Caco-2 (cell line): ENCODE measurements at regions of chr2 and their contacts with region 1.

Region 1: DNA sequence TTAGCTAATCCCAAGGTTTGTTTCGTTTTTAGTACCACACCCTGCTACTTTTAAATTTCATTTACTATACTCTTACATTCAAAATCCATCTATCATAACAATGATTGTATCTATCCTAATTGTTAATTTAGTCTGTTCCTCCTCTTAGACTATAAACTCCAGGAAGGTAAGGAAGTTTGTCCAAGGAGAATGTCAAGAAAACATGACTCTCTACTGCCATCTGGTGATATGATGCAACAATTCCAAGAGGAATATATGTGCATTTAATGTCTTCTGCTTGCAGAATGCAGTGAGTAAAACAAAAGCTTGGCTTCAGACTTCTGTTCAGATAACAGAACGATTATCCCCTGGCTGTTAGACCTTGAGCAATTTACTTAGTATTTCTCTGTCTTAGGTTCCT is 1267.1 kb downstream of the LRP1B start:
- DNase-seq: peak in 1 of 2 experiments; percentile 35
- H3K4me3 ChIP-seq: no peak overlapping the region
- H3K4me3 Mint-ChIP-seq: no peak overlapping the region
- H3K27ac Mint-ChIP-seq: no peak overlapping the region
- H3K4me1 ChIP-seq: no peaks in the 10 kb centered on the region
- H3K4me1 Mint-ChIP-seq: peaks cover 7% of the 10 kb centered on the region
- H3K27me3 ChIP-seq: no peaks in the 10 kb centered on the region
- H3K27me3 Mint-ChIP-seq: no peaks in the 10 kb centered on the region
- CTCF ChIP-seq: peak; percentile 56 to 68

Region 2: GRCh38 chr2:140085674-140086073 is 778.0 kb before region 1 on chr2:
- CTCF ChIA-PET with region 1: no interaction called
- POLR2A ChIA-PET with region 1: no interaction called
- intact Hi-C with region 1: loop called (anchors 5 kb)
- DNase-seq: no peak
- H3K4me3 ChIP-seq: no peak overlapping the region
- H3K4me3 Mint-ChIP-seq: no peak overlapping the region
- H3K27ac Mint-ChIP-seq: no peak overlapping the region
- H3K4me1 ChIP-seq: no peaks in the 10 kb centered on the region
- H3K4me1 Mint-ChIP-seq: no peaks in the 10 kb centered on the region
- H3K27me3 ChIP-seq: no peaks in the 10 kb centered on the region
- H3K27me3 Mint-ChIP-seq: peaks cover 2% of the 10 kb centered on the region
- CTCF ChIP-seq: no peak

Region 3: DNA sequence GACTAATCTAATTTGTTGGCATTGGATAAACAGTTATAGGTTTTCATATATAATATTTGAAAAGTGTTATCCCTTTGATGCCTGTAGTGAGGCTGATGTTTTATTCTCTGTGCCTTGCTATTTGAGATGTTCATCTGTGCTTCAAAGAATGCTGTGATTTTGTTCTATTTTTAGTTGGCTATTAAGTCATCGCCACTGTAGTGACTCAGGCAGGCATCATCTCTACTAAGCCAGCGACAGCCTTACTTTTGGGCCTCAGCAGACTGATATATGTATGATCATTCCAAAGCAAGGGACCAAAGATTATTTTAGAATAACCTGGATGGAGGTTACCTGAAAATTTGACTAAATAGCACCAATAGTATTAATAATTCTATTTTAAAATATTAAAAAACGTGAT is 409.0 kb before region 1 on chr2:
- CTCF ChIA-PET with region 1: no interaction called
- POLR2A ChIA-PET with region 1: no interaction called
- intact Hi-C with region 1: no loop called
- DNase-seq: no peak
- H3K4me3 ChIP-seq: no peak overlapping the region
- H3K4me3 Mint-ChIP-seq: no peak overlapping the region
- H3K27ac Mint-ChIP-seq: no peak overlapping the region
- H3K4me1 ChIP-seq: no peaks in the 10 kb centered on the region
- H3K4me1 Mint-ChIP-seq: no peaks in the 10 kb centered on the region
- H3K27me3 ChIP-seq: no peaks in the 10 kb centered on the region
- H3K27me3 Mint-ChIP-seq: no peaks in the 10 kb centered on the region
- CTCF ChIP-seq: no peak

Region 4: GRCh38 chr2:140695163-140695562 is 168.6 kb before region 1 on chr2:
- CTCF ChIA-PET with region 1: no interaction called
- POLR2A ChIA-PET with region 1: no interaction called
- intact Hi-C with region 1: loop called (anchors 5 kb)
- DNase-seq: no peak
- H3K4me3 ChIP-seq: no peak overlapping the region
- H3K4me3 Mint-ChIP-seq: no peak overlapping the region
- H3K27ac Mint-ChIP-seq: no peak overlapping the region
- H3K4me1 ChIP-seq: no peaks in the 10 kb centered on the region
- H3K4me1 Mint-ChIP-seq: no peaks in the 10 kb centered on the region
- H3K27me3 ChIP-seq: no peaks in the 10 kb centered on the region
- H3K27me3 Mint-ChIP-seq: peaks cover 5% of the 10 kb centered on the region
- CTCF ChIP-seq: no peak

Region 5: DNA sequence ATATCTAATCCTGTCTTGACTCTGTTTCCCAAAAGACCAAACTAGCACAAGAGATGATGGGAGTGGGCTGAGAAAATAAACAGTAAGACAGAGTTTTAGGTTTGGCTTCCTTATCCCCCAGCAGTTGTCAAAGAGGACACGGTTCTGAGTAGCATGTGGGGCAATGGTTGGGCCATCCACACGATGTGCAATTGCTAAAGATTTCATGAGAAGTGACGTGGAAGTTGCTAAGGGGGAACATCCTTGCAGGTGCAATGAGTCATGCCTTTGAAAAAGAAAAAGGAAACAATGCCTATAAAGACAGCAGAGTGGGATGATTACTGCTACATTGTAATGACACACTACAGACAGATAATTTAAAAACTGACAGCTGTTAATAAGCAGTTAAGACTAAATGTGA is 128.7 kb before region 1 on chr2:
- CTCF ChIA-PET with region 1: no interaction called
- POLR2A ChIA-PET with region 1: no interaction called
- intact Hi-C with region 1: loop called (anchors 1 kb)
- DNase-seq: no peak
- H3K4me3 ChIP-seq: no peak overlapping the region
- H3K4me3 Mint-ChIP-seq: no peak overlapping the region
- H3K27ac Mint-ChIP-seq: no peak overlapping the region
- H3K4me1 ChIP-seq: no peaks in the 10 kb centered on the region
- H3K4me1 Mint-ChIP-seq: no peaks in the 10 kb centered on the region
- H3K27me3 ChIP-seq: no peaks in the 10 kb centered on the region
- H3K27me3 Mint-ChIP-seq: peaks cover 14% of the 10 kb centered on the region
- CTCF ChIP-seq: no peak